Endothelial cell of umbilical vein (primary cell): ENCODE measurements at regions of chr9 and their contacts with region 1.

Region 1: DNA sequence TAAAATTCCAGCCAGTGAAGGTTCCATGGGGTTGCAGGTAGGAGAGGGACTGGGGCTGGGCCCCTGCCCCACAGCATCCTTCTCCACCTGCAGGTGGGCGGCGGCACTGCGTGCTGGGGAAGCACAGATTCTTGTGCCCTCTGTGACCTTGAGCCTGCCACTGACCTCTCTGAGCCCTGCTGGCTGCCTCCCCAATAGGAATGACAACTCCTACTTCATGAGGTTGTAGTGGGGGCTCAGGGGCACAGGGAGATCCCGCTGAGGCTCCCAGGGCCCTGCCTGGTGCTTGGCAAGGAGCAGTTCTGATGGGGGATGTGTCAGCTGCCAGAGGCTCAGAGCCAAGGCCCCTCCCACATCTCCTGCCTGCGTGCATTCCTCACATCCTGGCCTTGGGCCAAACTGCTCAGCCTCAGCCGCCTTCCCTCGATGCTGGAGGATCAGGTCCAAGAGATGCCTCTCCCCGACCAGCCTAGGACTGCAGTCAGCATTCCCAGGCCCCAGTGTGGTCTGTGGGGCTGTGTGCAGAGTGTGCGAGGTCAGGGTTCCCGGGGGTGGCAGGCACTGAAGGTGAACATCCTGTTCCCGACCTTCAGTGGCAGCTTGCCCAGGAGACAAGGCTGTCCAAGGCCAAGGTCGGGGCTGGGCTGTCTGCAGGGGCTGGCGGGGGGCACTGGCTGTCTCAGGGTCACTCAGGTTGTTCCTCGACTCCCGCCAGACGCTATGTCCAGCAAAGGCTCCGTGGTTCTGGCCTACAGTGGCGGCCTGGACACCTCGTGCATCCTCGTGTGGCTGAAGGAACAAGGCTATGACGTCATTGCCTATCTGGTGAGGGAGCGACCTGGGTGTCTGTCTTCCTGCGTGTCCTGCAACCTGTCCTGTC is 7.0 kb downstream of the ASS1 start:
- DNase-seq: peak; percentile 93
- H3K4me3 ChIP-seq: no peak overlapping the region
- H3K27ac ChIP-seq: no peak overlapping the region
- H3K4me1 ChIP-seq: peaks cover 30% of the 10 kb centered on the region
- H3K27me3 ChIP-seq: peaks cover 0 to 2% of the 10 kb centered on the region in 2 experiments
- CTCF ChIP-seq: peak; percentile 58 to 74
- POLR2A ChIP-seq: no peak

Region 2: DNA sequence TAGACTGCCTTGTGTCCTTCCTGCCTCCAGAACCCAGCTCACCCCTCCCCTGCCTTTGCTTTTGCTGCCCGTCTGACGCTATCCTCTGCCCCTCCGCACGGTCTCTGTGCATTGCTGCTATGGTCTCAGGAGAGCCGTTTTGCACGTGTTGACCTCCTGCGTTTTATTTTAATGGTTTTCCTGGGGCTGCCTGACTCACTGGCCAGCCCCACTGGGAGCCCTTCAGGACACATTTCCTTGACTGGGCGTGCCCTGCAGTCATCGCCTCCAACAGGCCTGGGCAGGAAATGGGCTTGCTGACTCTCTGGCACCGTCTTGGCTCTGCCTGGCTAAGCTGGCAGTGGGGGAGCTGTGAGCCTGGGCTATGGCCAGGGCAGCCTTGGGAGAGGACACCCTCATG is 24.9 kb before region 1 on chr9:
- CTCF ChIA-PET with region 1: interaction called, 6 read pairs
- POLR2A ChIA-PET with region 1: no interaction called
- dilution Hi-C with region 1: no loop called
- intact Hi-C with region 1: loop called (anchors 1 kb)
- DNase-seq: peak; percentile 90
- H3K4me3 ChIP-seq: no peak overlapping the region
- H3K27ac ChIP-seq: no peak overlapping the region
- H3K4me1 ChIP-seq: peaks cover 12% of the 10 kb centered on the region
- H3K27me3 ChIP-seq: peaks cover 0 to 2% of the 10 kb centered on the region in 2 experiments
- CTCF ChIP-seq: peak in 1 of 2 donors; percentile 7
- POLR2A ChIP-seq: no peak